Cardiac septum (tissue), 1 donor: ENCODE measurements at regions of chr3 and their contacts with region 1.

Region 1: DNA sequence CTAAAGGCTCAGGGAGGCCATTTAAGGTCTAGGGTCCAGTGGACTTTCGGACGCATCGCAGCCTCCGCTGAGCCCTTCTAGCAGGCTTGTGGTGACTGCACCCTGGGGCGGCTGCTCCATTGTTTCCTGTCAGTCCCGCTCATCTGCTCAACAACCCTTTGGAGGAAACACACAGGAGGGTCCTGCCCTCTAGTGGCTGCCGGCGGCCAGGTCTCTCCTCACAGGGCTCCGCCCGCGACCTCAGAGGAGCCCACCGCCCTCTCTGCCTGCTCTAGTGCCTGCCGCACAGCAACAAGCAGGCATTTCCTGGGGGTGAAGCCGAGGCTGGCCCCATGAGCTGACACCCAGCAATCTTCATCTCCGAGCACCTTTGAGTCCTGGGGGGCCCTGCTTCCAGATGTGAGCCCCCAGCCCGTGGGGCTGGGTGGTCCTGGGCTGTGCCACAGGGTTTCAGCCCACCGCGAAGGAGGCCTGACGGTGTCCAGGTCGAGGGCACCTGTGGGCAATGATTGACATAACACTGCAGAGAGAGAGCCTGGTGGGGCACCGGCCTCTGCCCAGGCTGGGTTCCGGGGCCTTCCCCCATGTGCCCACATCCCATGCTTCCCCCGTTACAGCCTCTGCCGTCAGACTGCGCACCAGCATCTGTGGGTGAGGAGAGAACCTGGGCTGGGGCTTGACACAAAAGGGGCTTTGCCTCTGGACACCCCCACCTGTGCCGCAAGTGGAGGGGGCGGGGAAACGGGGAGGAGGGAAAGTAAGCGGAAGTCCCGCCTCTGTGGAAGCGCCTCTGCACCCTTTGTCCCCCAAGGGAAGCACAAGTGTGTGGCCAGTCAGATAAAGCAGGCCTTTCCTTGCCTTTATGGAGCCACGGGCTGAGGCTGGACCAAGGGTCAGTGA is 27.0 kb upstream of the SFMBT1 start:
- DNase-seq: peak; percentile 92

Region 2: DNA sequence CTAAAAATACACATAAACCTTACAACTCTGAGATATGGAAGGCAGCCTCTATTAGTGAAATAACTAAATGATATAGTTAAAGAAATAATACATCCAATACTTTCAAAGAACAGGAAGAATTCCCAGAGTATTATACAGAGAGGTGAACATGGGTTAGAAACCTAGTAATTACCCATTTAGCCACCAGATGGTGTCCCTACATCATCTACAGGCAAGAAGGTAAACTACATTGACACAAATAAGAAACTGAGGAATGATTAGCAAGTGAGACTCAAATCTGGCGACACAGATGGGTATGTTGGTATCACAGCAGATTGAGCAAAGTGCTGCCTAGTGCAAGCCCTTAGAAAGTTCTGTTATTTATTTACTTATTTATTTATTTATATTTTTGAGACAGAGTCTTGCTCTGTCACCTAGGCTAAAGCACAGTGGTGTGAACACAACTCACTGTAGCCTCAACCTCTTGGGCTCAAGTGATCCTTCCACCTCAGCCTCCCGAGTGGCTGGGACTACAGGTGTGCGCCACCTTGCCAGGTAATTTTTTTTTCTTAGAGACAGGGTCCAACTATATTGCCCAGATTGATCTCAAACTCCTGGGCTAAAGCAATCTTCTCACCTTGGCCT is 330.4 kb before region 1 on chr3:
- intact Hi-C with region 1: loop called (anchors 2 kb)
- DNase-seq: no peak

Region 3: DNA sequence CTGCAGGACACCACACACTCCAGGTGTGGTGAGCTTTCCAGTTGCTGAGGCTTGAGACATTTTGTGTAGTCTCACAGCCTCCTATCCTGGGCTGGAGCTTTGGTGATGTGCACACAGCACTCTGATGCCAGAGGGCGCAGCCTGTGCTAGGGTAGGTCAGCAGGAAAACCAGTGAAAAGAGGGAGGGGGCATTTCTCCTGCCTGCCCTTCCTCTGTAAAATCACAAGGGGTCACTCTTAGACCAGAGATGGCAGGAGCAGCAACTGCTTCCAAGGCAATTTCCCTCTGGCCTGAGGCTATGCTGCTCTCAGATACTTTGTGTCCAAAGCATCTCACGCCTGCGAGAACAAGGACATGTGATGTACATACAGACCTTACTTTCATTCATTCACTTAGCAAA is 221.6 kb before region 1 on chr3:
- intact Hi-C with region 1: loop called (anchors 5 kb)
- DNase-seq: no peak

Region 4: DNA sequence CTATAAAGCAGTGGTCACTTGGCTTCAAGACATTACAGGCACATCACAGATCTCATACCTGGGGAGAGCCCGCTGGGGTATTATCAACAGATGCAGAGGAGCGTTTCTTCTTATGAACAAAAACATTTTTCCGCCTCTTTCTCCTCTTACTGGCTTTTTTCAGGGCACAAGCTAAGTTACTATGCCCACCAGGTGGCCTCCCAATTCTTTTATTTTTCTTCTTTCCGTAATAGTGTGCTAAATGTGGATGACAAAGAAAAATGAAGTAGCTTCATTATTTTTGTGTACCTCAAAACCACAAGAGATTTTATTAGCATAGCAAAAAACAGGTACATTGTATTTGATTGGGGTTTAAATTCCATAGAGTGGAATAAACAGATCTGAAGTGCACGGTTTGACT is 165.4 kb before region 1 on chr3:
- intact Hi-C with region 1: no loop called
- DNase-seq: no peak

Region 5: DNA sequence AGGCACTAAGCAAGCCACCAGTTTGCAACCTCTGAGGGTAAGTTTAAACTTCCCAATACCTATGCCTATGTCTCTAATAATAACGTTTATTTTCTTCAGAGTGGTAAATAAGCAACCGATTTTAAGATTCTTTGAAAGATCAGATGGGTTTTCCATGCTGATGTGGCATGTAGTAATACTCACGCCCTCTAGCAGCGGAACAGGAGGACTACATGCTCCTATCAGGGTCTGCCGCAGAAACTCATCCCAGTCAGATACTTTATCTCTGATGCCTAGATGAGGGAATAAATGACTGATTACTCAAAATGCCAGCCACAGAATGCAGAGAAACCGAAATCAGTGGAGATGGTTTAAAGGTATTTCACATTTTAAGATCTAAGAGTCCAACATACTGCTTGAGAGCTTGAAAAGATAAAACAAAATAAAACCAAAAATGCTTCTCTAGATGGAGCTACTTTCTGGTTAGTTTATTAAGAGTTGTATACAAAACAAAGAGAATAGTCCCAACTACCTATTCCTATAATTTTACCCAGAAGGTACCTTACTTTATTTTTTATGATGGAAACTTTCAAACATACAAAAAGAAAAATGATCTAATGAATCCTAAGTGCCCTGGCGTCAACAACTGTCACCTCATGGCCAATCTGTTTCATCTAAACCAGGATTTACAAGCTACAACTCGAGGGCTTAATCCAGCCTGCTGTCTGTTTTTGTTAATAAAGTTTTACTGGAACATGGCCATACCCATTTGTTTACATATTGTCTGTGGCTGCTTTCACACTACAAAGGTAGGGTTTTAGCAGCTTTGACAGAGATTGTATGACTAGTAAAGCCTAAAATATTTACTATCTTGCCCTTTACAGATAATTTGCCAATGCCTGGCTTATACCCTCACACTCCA is 138.0 kb before region 1 on chr3:
- intact Hi-C with region 1: loop called (anchors 2 kb)
- DNase-seq: no peak